IMR-90 (cell line): ENCODE measurements at regions of chr15 and their contacts with region 1.

Region 1: GRCh38 chr15:25508369-25509002 is 69.7 kb upstream of the UBE3A start:
- DNase-seq: peak; percentile 64
- ATAC-seq: peak; percentile 65; the same call in 1 of the 2 replicates
- H3K4me3 ChIP-seq: no peak overlapping the region
- H3K27ac ChIP-seq: no peak overlapping the region
- H3K4me1 ChIP-seq: peaks cover 3% of the 10 kb centered on the region; the same call in 1 of the 2 replicates
- H3K27me3 ChIP-seq: no peaks in the 10 kb centered on the region
- CTCF ChIP-seq: peak; percentile 86
- POLR2A ChIP-seq: 0 out of 2 replicates have a peak, but pooled peaks have one; percentile 32
- RAD21 ChIP-seq: peak; percentile 92

Region 2: GRCh38 chr15:23642413-23643044 is 1866.0 kb before region 1 on chr15:
- CTCF ChIA-PET with region 1: no interaction called
- POLR2A ChIA-PET with region 1: no interaction called
- dilution Hi-C with region 1: no loop called
- in situ Hi-C with region 1: no loop called
- intact Hi-C with region 1: loop called (anchors 10 kb)
- DNase-seq: peak; percentile 51
- ATAC-seq: peak; percentile 94
- H3K4me3 ChIP-seq: no peak overlapping the region
- H3K27ac ChIP-seq: no peak overlapping the region
- H3K4me1 ChIP-seq: no peaks in the 10 kb centered on the region
- H3K27me3 ChIP-seq: no peaks in the 10 kb centered on the region
- CTCF ChIP-seq: peak; percentile 81
- POLR2A ChIP-seq: no peak
- RAD21 ChIP-seq: peak; percentile 80

Region 3: GRCh38 chr15:25568751-25569150 is 60.3 kb after region 1 on chr15:
- CTCF ChIA-PET with region 1: no interaction called
- POLR2A ChIA-PET with region 1: no interaction called
- dilution Hi-C with region 1: no loop called
- in situ Hi-C with region 1: no loop called
- intact Hi-C with region 1: no loop called
- DNase-seq: no peak
- ATAC-seq: no peak
- H3K4me3 ChIP-seq: no peak overlapping the region
- H3K27ac ChIP-seq: no peak overlapping the region
- H3K4me1 ChIP-seq: no peaks in the 10 kb centered on the region
- H3K27me3 ChIP-seq: no peaks in the 10 kb centered on the region
- CTCF ChIP-seq: no peak
- POLR2A ChIP-seq: no peak
- RAD21 ChIP-seq: no peak

Region 4: DNA sequence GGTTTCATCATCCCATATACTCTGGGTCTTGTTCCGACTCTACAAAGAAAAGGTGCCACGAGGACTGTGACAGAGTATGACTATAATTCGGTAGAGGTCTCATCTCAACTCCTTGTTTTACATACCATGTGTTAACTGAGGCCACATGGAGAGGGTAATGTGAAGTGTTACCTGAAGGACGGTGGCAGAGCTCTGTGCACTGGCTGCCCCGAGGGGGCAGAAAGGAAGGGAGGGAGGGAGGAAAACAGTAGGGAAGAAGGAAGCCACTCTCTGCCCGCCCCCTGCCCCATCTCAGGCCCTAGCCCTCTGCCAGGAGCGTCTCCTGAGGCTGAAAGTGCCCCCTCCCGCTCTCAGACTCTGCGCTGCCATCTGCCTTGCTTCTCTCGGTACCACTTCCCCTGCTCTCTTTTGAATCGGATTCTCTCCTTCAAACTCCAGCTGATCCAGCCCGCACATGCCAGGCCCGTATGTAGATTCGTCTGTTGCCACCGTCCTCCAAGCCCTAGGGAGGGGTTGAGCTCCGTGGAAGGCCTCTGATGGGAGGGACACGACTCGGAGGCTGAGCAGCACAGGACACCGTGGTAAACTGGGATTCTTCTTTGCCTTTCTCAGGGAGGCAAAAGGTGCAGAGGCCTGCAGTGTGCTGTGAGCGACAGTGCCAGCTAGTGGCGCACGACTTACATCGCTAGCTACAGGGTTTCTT is 425.1 kb after region 1 on chr15:
- CTCF ChIA-PET with region 1: interaction called, 4 read pairs
- POLR2A ChIA-PET with region 1: no interaction called
- dilution Hi-C with region 1: no loop called
- in situ Hi-C with region 1: loop called (anchors 10 kb)
- intact Hi-C with region 1: loop called (anchors 1 kb)
- DNase-seq: peak; percentile 87
- ATAC-seq: peak; percentile 99
- H3K4me3 ChIP-seq: peak overlapping the region; percentile 32
- H3K27ac ChIP-seq: peak overlapping the region; percentile 24; the same call in 1 of the 2 replicates
- H3K4me1 ChIP-seq: peaks cover 3% of the 10 kb centered on the region; the same call in 1 of the 2 replicates
- H3K27me3 ChIP-seq: no peaks in the 10 kb centered on the region
- CTCF ChIP-seq: peak; percentile 94
- POLR2A ChIP-seq: peak; percentile 58; the same call in 1 of the 2 replicates
- RAD21 ChIP-seq: peak; percentile 97

Region 5: DNA sequence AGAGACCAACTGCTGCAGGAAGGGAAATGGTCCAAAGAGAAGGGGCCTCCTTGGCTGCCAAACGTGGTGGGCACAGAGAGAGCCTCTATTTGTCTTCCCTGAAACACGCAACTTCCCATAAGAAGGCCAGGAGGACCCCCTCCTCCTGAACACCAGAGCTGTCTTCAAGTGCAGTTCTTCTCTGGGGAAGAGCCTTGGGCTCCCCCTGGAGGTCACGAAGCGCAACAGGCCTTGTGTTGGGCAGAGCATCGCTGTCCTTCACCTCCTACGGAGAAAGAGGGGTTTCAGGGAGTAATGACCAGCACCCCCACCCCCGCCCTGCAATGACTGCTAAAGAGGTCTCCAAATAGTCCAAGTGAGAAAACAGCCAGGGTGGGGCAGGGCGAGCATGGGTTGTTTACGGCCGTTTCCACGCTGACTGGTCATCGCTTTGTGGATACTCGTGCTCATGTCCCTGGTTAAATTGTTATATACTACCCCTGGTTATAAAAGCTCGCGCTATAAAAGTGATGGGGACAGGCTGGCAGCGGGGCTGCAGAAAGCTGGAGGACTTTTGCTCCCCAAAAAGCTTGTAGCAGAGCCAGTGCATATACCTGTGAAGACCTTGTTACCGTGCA is 752.1 kb after region 1 on chr15:
- CTCF ChIA-PET with region 1: interaction called, 5 read pairs
- POLR2A ChIA-PET with region 1: no interaction called
- dilution Hi-C with region 1: no loop called
- in situ Hi-C with region 1: loop called (anchors 10 kb)
- intact Hi-C with region 1: no loop called
- DNase-seq: peak; percentile 22
- ATAC-seq: peak; percentile 72
- H3K4me3 ChIP-seq: no peak overlapping the region
- H3K27ac ChIP-seq: no peak overlapping the region
- H3K4me1 ChIP-seq: no peaks in the 10 kb centered on the region
- H3K27me3 ChIP-seq: no peaks in the 10 kb centered on the region
- CTCF ChIP-seq: peak; percentile 61
- POLR2A ChIP-seq: no peak
- RAD21 ChIP-seq: peak; percentile 68

Region 6: GRCh38 chr15:27017168-27017809 is 1508.8 kb after region 1 on chr15:
- CTCF ChIA-PET with region 1: no interaction called
- POLR2A ChIA-PET with region 1: no interaction called
- dilution Hi-C with region 1: no loop called
- in situ Hi-C with region 1: loop called (anchors 25 kb)
- intact Hi-C with region 1: loop called (anchors 5 kb)
- DNase-seq: peak; percentile 58
- ATAC-seq: peak; percentile 70
- H3K4me3 ChIP-seq: no peak overlapping the region
- H3K27ac ChIP-seq: no peak overlapping the region
- H3K4me1 ChIP-seq: no peaks in the 10 kb centered on the region
- H3K27me3 ChIP-seq: no peaks in the 10 kb centered on the region
- CTCF ChIP-seq: peak; percentile 78
- POLR2A ChIP-seq: no peak
- RAD21 ChIP-seq: peak; percentile 60